ENCODE measurements at regions of chr11 and their contacts with region 1.

Region 1: GRCh38 chr11:88543902-88544655 is 206.5 kb upstream of the CTSC start:
- DNase-seq: peak; percentile 80
- ATAC-seq: peak; percentile 99 to 100

Region 2: GRCh38 chr11:87352759-87353707 is 1191.0 kb before region 1 on chr11:
- intact Hi-C with region 1: loop called in 1 of 2 experiments (anchors 10 kb)
- DNase-seq: peak; percentile 87
- ATAC-seq: peak; percentile 92 to 95

Region 3: DNA sequence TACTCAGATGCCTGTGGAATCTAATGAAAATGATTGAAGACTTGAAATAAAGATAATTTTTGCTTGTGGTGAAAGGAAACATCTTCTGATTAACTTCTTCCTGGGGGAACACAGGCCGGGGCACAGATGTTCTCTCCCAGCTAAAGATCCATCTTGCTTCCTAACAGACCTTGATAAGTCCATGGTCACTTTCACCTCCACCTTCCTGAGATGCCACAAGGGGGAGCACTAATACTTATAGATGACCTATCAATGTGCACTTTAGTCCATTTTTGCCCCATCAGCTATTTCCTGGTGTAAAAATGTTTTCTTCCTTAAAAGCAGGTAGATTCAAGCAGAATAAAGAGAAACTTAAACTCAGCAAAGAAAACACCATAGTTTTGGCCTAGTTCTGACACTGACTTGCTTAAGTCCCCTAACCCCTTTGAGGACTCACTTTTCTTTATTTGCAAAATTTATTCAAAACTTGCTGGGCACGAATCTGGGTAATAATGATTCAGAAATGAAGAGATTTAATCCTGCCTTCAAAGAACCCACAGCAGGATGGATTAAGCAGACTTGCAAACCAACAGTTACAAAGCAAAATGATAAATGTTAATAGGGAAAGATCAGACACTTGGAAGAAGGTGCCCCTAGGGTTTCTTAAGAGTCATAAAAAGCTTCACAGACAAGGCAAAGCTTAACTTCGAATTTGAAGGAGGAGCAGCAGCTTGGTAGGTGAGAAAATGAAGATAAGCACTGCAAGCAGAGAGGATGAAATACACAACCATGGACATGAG is 527.5 kb before region 1 on chr11:
- intact Hi-C with region 1: loop called in 1 of 2 experiments (anchors 1 kb)
- DNase-seq: peak; percentile 52
- ATAC-seq: peak; percentile 80

Region 4: GRCh38 chr11:88231894-88232482 is 312.1 kb before region 1 on chr11:
- intact Hi-C with region 1: loop called in 1 of 2 experiments (anchors 5 kb)
- DNase-seq: no peak
- ATAC-seq: peak in 1 of 2 donors; percentile 57

Region 5: GRCh38 chr11:88555018-88555828 is 11.1 kb after region 1 on chr11:
- intact Hi-C with region 1: no loop called
- DNase-seq: no peak
- ATAC-seq: peak; percentile 19 to 75